ENCODE measurements at regions of chr18 and their contacts with region 1.

Region 1: DNA sequence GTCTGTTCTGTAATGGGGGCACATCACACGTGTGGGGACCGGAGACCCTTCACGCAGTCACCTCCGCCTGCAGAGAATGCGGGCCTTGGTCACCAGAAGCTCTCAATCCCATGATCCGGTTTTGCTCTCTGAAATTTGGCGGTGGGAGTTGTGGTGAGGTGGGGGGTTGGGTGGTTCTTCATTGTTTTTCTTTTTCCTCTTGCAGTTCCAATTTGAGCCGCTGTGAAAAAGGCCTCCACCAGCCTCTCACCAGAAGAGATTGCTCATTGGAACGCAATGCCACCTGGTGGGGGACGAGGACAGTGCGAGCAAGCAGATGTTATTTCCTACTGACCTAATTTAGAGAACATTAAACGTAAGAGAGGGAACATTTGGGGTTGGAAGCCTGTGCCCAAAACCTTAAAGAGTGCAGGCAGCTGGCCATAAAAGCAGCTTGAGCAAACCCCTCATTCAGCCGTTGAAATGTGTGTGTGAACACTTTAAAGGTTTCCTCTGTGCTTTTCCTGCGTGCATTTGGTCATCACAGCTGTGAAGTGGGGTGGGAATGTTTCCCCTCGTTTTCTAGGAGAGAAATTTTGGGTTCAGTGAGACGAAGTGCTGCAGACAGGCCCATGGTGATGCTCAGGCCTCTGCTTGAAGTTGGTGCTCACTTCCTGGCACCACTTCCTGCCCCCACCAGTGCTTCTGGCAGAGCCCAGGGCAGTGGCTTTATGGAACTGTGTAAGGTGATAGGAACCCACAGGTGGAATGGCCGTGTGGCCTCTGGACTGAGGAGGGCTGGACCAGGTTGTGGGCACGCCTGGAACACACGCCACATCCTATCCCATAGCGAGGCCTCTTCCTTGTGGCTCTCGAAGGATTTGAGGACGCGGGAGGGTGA is 61.7 kb downstream of the ZCCHC2 start:
- DNase-seq: peak; percentile 88
- CTCF ChIP-seq: peak; percentile 96

Region 2: DNA sequence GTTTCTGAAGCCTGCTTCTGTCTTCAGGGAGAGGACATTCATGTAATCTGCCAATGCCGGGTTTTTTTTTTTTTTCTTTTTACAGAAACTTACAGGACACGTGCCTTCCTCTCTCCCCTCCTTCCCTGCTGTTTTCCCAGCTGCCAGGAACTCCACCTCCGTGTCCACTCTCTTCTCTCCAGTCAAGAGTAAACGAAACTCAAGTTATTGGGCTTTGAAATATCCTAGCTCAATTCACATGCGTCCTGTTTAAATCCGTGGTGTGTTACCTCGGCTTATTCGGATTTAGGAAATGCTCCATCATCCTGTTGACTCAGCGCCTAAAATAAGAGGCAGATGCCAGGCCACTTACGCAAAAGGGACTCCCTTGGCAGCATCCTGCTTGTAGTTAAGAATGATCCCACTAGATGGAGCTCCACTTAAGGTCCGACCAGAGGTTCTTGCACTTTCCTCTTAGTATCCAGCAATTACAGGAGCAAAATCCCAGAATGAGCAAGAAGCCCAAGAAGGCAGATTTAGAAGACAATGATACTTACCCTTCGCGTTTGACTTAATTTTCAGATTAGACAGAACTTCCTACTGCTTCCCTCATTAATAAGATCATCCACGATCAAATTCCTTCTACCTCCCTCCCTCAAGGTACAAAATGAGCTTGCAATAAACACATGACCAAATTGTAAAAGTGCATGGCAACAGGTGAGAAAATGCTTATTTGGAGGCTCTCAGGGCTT is 158.9 kb before region 1 on chr18:
- CTCF ChIA-PET with region 1: interaction called, 53 read pairs
- POLR2A ChIA-PET with region 1: no interaction called
- DNase-seq: peak; percentile 56
- CTCF ChIP-seq: peak; percentile 83

Region 3: GRCh38 chr18:62522504-62523254 is 61.8 kb before region 1 on chr18 and contains the start of gene ZCCHC2:
- CTCF ChIA-PET with region 1: interaction called, 10 read pairs
- POLR2A ChIA-PET with region 1: interaction called, 5 read pairs
- DNase-seq: peak; percentile 96
- CTCF ChIP-seq: no peak

Region 4: GRCh38 chr18:62605685-62606084 is 21.2 kb after region 1 on chr18:
- CTCF ChIA-PET with region 1: interaction called, 23 read pairs
- POLR2A ChIA-PET with region 1: no interaction called
- DNase-seq: no peak
- CTCF ChIP-seq: no peak

Region 5: DNA sequence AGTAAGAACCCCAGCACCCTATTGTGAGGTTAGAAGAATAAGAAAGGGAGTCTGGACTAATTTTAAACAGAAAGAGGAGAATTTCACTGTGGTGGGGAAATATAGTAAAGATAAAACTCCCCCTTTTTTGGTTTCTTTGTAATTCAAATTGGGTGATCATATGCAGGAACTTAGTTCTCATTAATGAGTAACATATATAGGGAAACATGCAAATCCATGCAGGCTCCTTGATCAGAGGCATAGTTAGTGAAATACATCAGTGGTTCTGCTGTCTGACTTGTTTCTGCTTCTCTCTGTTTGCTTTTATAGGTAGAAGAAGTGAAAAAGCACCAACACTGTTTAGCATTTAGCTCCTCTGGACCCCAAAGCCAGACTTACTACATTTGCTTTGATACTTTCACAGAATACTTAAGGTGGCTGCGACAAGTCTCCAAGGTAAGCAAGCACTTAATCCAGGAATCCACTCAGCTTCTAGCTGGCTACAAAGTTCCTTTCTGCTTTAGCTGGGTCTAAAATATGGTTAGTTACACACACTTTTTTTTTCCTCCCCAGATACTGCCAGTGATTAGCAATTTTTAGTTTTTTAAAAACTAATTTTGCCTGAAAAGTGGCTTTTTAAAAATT is 254.1 kb after region 1 on chr18:
- CTCF ChIA-PET with region 1: no interaction called
- POLR2A ChIA-PET with region 1: no interaction called
- DNase-seq: peak; percentile 47
- CTCF ChIP-seq: no peak

Region 6: GRCh38 chr18:62957885-62958472 is 373.5 kb after region 1 on chr18:
- CTCF ChIA-PET with region 1: interaction called, 72 read pairs
- POLR2A ChIA-PET with region 1: no interaction called
- DNase-seq: no peak
- CTCF ChIP-seq: peak; percentile 40